Aorta (tissue), 5 donors: ENCODE measurements at regions of chr1 and their contacts with region 1.

Region 1: DNA sequence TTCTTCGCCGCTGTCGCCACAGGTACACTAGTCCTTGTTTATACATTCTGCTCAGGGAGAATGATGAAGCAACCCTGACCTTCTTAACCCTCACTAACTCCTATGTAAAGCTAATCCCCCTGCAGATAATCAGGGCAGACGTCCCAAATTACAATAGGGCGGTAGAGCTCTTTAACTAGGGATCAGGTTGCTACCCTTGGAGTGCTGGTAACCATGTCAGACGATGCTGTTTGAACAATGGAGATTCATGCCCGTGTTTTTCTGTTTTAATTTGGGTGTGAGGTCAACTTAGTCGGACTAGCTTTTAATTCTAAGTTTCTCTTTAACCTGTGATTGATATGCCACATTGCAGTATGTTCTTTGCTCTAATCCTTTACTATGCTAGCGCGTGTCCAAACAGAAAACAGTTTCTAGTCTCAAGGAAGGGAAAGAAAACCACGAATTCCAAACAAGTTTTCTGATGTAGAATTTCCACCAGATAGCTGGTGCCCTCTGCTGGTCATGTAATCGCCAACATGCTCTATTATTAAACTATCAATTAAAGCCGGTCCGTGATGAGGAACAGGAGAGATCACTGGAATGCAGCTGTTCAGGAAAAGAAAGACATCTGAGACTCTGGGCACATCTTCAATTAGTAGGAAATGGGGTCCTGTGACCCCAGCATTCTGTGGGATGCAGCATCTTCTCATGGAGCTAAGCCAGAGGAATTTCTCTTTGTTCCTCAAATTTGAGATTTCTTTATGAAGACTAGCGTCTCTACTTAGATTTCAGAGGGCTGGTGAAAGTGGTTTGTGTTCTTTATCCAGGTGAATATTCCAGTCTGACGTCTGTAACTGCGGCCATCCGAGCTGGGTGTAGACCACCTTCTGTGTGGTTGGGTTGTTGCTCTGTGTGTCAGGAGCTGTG is 18.3 kb upstream of the VAMP3 start:
- DNase-seq: peak in 1 of 2 donors; percentile 56
- ATAC-seq: peak; percentile 76
- H3K4me3 ChIP-seq: peak overlapping the region; percentile 53 to 64
- H3K27ac ChIP-seq: no peak overlapping the region
- H3K4me1 ChIP-seq: peaks cover 0 to 1% of the 10 kb centered on the region in 2 donors
- H3K27me3 ChIP-seq: no peaks in the 10 kb centered on the region

Region 2: DNA sequence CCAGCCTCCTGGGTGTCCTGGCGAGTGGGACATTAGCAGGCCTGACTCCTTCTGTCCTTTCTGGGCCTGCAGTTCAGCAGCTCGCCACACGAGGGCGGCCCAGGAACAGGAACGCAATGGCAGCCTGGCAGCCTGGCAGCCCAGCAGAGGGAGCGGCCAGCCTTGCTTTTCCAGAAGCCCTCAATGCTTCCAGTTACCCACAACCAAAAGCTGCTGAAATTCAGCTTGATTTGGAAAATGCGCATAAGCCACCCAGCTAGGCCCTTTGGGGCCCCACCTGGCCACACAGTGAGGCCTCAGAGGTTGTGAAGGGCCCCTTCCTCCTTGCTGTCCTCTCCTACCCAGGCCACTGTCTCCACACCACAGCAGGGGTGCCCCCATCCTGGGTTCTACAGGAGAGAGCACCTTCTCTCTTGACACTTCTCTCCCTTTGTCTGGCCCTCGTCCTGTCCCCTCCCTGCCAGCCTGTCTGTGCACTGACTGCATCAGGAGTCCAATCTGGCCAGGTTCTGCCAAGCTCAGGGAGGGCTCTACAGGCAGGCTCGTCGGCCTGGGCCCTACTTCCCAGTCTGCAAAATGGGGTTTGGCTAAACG is 85.0 kb before region 1 on chr1:
- intact Hi-C with region 1: loop called (anchors 1 kb)
- DNase-seq: peak; percentile 92 to 96
- ATAC-seq: peak; percentile 90
- H3K4me3 ChIP-seq: no peak overlapping the region
- H3K27ac ChIP-seq: no peak overlapping the region
- H3K4me1 ChIP-seq: no peaks in the 10 kb centered on the region
- H3K27me3 ChIP-seq: no peaks in the 10 kb centered on the region

Region 3: DNA sequence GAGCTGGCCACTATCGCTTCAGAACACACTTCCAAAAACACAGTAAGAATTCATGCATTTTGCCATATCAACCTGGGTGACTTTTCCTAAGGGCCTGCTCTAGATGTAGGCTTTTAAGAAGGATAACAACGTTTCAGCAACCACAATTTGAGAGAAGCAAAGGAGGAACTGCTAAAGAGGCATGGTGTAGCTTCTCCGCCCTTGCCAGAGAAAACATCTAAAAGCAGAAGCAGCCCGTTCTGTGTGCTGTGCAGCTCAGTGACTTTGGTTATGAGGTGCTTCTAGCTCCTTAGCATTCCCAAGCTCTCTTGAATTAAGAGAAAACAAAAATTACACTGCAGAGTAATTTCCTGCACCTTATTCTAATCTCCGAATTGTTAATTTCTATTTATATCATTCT is 34.0 kb after region 1 on chr1:
- intact Hi-C with region 1: no loop called
- DNase-seq: no peak
- ATAC-seq: no peak
- H3K4me3 ChIP-seq: no peak overlapping the region
- H3K27ac ChIP-seq: no peak overlapping the region
- H3K4me1 ChIP-seq: no peaks in the 10 kb centered on the region
- H3K27me3 ChIP-seq: no peaks in the 10 kb centered on the region